PC-9 (cell line): ENCODE measurements at regions of chr18 and their contacts with region 1.

Region 1: GRCh38 chr18:3434685-3435084 is 15.3 kb upstream of the TGIF1 start:
- DNase-seq: no peak
- H3K4me3 ChIP-seq: no peak overlapping the region
- H3K27ac ChIP-seq: no peak overlapping the region
- H3K4me1 ChIP-seq: no peaks in the 10 kb centered on the region
- H3K27me3 ChIP-seq: no peaks in the 10 kb centered on the region
- CTCF ChIP-seq: no peak

Region 2: GRCh38 chr18:3119401-3120335 is 315.0 kb before region 1 on chr18:
- CTCF ChIA-PET with region 1: no interaction called
- POLR2A ChIA-PET with region 1: no interaction called
- intact Hi-C with region 1: no loop called
- DNase-seq: peak; percentile 52 to 98
- H3K4me3 ChIP-seq: no peak overlapping the region
- H3K27ac ChIP-seq: peak overlapping the region; percentile 82
- H3K4me1 ChIP-seq: peaks cover 68% of the 10 kb centered on the region
- H3K27me3 ChIP-seq: no peaks in the 10 kb centered on the region
- CTCF ChIP-seq: no peak

Region 3: DNA sequence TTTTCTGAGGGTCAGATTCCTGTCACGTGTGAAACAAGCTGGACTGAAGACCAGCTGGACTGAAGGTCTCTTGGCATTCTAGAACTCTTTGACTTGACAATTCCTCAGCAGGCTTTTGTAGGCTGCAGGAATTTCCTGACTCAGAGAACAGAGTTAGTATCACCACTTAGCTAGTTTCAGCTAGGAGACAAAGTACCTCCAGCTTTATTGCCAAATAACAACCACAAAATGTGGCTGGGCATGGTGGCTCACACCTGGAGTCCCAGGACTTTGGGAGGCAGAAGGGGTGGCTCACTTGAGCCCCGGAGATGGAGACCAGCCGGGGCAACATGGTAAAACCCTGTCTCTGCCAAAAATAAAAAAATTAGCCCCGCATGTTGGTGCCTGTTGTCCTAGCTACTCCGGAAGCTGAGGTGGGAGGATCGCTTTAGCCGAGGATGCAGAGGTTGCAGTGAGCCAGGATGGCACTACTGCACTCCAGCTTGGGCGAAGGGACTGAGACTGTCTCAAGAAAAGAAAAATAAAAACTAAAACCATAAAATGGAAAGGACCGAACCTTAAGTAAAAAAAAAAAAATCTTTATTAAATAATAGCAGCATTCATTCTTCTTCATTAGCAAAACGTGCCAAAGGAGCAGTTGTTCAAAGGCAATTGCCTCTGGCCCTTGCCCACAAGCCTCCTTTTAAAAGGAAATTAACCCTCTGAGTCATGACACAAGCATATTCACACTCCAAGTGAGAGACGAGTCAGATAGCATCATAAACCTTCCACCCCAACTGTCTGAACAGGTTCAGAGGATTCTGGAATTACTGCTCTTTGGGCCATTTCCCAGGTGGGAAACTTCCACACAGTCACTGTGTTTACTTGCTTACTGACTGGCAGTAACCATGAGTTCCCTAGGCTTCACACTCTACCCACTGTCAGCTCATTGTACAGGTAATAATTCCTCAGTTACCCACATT is 83.8 kb before region 1 on chr18:
- CTCF ChIA-PET with region 1: no interaction called
- POLR2A ChIA-PET with region 1: interaction called, 18 read pairs
- intact Hi-C with region 1: no loop called
- DNase-seq: peak; percentile 43 to 89
- H3K4me3 ChIP-seq: no peak overlapping the region
- H3K27ac ChIP-seq: peak overlapping the region; percentile 70
- H3K4me1 ChIP-seq: peaks cover 20% of the 10 kb centered on the region
- H3K27me3 ChIP-seq: no peaks in the 10 kb centered on the region
- CTCF ChIP-seq: no peak

Region 4: GRCh38 chr18:3514312-3515216 is 79.9 kb after region 1 on chr18:
- CTCF ChIA-PET with region 1: no interaction called
- POLR2A ChIA-PET with region 1: no interaction called
- intact Hi-C with region 1: no loop called
- DNase-seq: no peak
- H3K4me3 ChIP-seq: no peak overlapping the region
- H3K27ac ChIP-seq: no peak overlapping the region
- H3K4me1 ChIP-seq: peaks cover 16% of the 10 kb centered on the region
- H3K27me3 ChIP-seq: no peaks in the 10 kb centered on the region
- CTCF ChIP-seq: no peak